ENCODE measurements at regions of chr4 and their contacts with region 1.

Region 1: GRCh38 chr4:37628977-37629609 is 57.1 kb downstream of the RELL1 start:
- DNase-seq: peak; percentile 90 to 96
- ATAC-seq: peak; percentile 99
- H3K4me3 ChIP-seq: no peak overlapping the region
- H3K27ac ChIP-seq: peak overlapping the region; percentile 83 to 86 (median 84)
- H3K4me1 ChIP-seq: peaks cover 33 to 60% of the 10 kb centered on the region in 2 donors
- H3K27me3 ChIP-seq: no peaks in the 10 kb centered on the region
- CTCF ChIP-seq: peak in 1 of 5 experiments; percentile 13
- POLR2A ChIP-seq: no peak

Region 2: DNA sequence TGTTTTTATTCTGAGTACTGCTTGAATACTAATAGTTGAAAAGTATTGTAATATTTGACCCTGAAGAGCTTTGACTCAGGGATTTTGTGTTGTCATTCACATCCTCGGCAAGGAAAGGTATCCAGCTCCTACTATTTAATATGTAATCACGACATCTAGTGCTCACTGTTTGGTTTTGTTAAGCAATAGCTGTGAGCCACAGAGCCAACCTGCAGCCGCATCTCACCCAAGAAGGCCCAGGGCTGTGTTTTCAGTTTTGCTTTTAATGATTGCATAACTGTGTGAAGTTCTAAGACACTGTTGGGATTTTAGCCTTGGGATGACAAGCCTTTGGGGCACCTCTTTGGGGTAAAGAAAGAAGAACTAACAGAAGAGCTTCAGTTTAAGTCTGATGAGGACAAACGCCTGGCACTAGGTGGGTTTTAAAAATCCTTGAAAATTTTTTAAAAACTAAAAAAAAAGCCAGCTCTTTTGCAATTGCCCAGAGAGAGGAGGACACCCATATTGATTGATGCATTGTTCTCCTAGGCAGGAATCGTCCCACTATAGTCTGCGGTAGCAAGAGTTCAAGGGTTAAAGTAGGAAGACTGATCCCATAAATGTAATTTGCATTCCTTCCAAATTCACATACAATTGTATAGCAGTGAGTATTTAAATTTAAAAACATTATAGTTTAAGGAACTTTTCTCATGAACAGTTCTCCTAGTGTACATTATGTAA is 100.8 kb before region 1 on chr4:
- in situ Hi-C with region 1: no loop called
- intact Hi-C with region 1: no loop called
- DNase-seq: no peak
- ATAC-seq: no peak
- H3K4me3 ChIP-seq: no peak overlapping the region
- H3K27ac ChIP-seq: no peak overlapping the region
- H3K4me1 ChIP-seq: no peaks in the 10 kb centered on the region
- H3K27me3 ChIP-seq: no peaks in the 10 kb centered on the region
- CTCF ChIP-seq: no peak
- POLR2A ChIP-seq: no peak

Region 3: GRCh38 chr4:37584071-37584470 is 45.0 kb before region 1 on chr4:
- in situ Hi-C with region 1: no loop called
- intact Hi-C with region 1: no loop called
- DNase-seq: no peak
- ATAC-seq: no peak
- H3K4me3 ChIP-seq: no peak overlapping the region
- H3K27ac ChIP-seq: no peak overlapping the region
- H3K4me1 ChIP-seq: no peaks in the 10 kb centered on the region
- H3K27me3 ChIP-seq: no peaks in the 10 kb centered on the region
- CTCF ChIP-seq: no peak
- POLR2A ChIP-seq: no peak

Region 4: GRCh38 chr4:37648096-37648817 is 19.2 kb after region 1 on chr4:
- in situ Hi-C with region 1: no loop called
- intact Hi-C with region 1: loop called (anchors 2 kb)
- DNase-seq: peak; percentile 85 to 91
- ATAC-seq: peak; percentile 99 to 100
- H3K4me3 ChIP-seq: no peak overlapping the region
- H3K27ac ChIP-seq: peak overlapping the region; percentile 67 to 83 (median 77)
- H3K4me1 ChIP-seq: peaks cover 17 to 35% of the 10 kb centered on the region in 2 donors
- H3K27me3 ChIP-seq: no peaks in the 10 kb centered on the region
- CTCF ChIP-seq: no peak
- POLR2A ChIP-seq: no peak

Region 5: DNA sequence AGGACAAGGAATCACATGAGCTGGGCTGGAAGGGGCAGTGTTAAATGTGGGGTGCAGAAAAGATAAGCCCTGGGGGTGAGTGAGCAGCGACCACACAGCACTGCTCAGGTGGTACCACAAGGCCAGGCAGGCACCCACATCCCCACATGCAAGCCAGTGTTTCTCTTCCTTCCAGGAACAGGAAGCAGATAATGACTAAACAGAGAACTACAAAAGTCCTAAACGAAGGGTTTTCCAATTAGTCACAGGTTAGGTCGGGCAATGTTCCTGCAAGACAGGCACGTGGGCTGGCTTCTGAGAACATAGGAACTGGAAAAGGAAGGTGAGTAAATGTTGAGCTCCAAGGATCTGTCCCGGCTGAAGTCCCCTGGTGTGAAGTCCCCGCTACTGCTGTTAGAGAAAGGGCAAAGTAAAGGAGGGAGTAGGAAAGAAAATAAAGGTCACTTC is 37.6 kb after region 1 on chr4:
- in situ Hi-C with region 1: loop called in 1 of 4 experiments (anchors 5 kb)
- intact Hi-C with region 1: loop called (anchors 2 kb)
- DNase-seq: peak; percentile 75 to 83
- ATAC-seq: peak; percentile 96
- H3K4me3 ChIP-seq: no peak overlapping the region
- H3K27ac ChIP-seq: peak overlapping the region; percentile 72 to 83 (median 80)
- H3K4me1 ChIP-seq: peaks cover 57 to 65% of the 10 kb centered on the region in 2 donors
- H3K27me3 ChIP-seq: no peaks in the 10 kb centered on the region
- CTCF ChIP-seq: peak in 3 of 5 experiments; percentile 35 to 45 (median 42)
- POLR2A ChIP-seq: no peak

Region 6: GRCh38 chr4:37715889-37716402 is 86.9 kb after region 1 on chr4:
- in situ Hi-C with region 1: no loop called
- intact Hi-C with region 1: loop called (anchors 2 kb)
- DNase-seq: peak; percentile 83 to 89
- ATAC-seq: peak; percentile 97 to 98
- H3K4me3 ChIP-seq: no peak overlapping the region
- H3K27ac ChIP-seq: peak overlapping the region; percentile 68 to 83 (median 80)
- H3K4me1 ChIP-seq: peaks cover 10 to 13% of the 10 kb centered on the region in 2 donors
- H3K27me3 ChIP-seq: no peaks in the 10 kb centered on the region
- CTCF ChIP-seq: no peak
- POLR2A ChIP-seq: peak in 1 of 2 donors; percentile 29

Measured in gastrocnemius medialis (tissue), 4 donors.